Endothelial cell of umbilical vein (primary cell): ENCODE measurements at regions of chr20 and their contacts with region 1.

Region 1: DNA sequence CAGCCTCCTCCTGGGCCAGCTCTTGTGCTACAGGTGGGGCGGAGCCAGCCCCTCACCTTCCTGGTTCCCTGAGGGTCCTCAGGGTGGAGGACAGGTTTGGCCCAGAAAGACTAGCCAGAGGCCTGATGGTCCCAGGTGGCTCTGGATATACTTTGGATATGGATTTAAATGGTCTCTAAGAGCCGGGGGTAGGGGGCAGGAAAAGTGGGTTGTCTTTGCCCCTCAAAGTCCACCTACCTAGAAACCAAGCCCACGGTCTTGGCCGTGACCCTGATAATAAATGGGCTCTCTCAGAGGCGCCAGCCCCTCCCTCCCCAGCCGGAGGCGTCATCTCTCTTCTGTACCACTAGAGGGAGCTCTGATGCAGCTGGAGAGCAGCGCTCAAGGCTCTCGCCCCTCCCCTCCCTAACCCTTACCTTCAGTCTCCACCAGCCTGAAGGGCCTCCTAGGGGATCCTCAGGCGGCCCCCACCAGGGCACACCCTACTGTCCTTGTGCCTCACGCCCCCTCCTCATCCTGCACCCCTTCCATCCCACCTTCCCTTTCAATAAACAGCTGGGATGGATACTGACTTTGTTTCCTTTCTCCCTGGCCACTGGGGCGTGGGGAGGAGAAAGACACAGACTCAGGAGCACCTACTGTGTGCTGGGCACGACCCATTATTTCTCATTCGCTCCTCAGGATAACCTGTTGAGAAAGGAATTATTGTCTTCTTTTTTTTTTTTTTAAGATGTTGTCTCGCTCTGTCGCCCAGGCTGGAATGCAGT is 7.6 kb downstream of the NRSN2 start:
- DNase-seq: peak; percentile 76
- H3K4me3 ChIP-seq: no peak overlapping the region
- H3K27ac ChIP-seq: no peak overlapping the region
- H3K4me1 ChIP-seq: no peaks in the 10 kb centered on the region
- H3K27me3 ChIP-seq: no peaks in the 10 kb centered on the region
- CTCF ChIP-seq: peak; percentile 89 to 94
- POLR2A ChIP-seq: no peak

Region 2: GRCh38 chr20:371755-372542 is 17.5 kb after region 1 on chr20:
- CTCF ChIA-PET with region 1: interaction called, 39 read pairs
- POLR2A ChIA-PET with region 1: interaction called, 4 read pairs
- dilution Hi-C with region 1: no loop called
- intact Hi-C with region 1: loop called (anchors 2 kb)
- DNase-seq: peak; percentile 93
- H3K4me3 ChIP-seq: no peak overlapping the region
- H3K27ac ChIP-seq: peak overlapping the region; percentile 82
- H3K4me1 ChIP-seq: peaks cover 52% of the 10 kb centered on the region
- H3K27me3 ChIP-seq: no peaks in the 10 kb centered on the region
- CTCF ChIP-seq: no peak
- POLR2A ChIP-seq: no peak

Region 3: DNA sequence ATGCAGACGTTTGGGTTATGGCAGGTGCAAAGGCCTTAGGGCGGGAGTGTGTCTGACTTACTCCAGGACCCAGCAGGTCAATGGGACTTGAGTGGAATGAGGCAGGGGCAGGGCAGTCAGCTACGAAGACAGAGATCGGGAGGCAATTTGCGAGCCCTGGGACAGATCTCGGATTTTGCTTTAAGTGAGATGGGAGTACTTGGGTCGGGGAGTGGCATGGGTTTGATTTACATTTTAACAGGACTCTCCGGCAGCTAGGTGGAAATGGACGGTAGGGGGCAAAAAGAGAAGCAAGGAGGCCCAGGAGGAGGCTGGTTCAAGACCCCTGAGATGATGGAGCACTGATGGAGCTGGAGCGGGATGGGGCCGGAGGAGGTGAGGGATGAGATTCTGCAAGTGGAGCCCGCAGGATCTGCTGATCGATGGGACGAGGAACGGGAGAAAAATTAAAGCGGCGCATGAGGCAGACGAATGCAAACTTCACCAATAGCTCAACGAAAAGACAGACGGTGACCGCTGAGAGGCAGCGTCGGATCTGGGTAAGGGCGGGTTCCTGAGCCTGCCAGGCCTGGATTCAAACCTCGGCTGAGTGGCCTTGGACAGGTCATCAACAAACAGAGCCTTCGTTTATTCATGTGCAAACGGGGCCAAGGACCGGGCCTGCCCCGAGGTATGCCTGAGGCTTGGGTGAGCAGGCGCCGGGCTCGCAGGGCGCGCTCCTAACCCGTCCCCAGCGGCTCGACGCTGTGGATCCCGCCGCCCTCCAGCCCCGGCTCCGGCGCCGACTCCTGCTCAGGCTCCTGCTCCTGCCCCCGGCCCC is 52.9 kb after region 1 on chr20:
- CTCF ChIA-PET with region 1: interaction called, 14 read pairs
- POLR2A ChIA-PET with region 1: no interaction called
- dilution Hi-C with region 1: no loop called
- intact Hi-C with region 1: loop called (anchors 1 kb)
- DNase-seq: peak; percentile 84
- H3K4me3 ChIP-seq: peak overlapping the region; percentile 14 to 51 (median 29)
- H3K27ac ChIP-seq: peak overlapping the region; percentile 50
- H3K4me1 ChIP-seq: peaks cover 17% of the 10 kb centered on the region
- H3K27me3 ChIP-seq: no peaks in the 10 kb centered on the region
- CTCF ChIP-seq: peak; percentile 11 to 18
- POLR2A ChIP-seq: peak; percentile 61

Region 4: DNA sequence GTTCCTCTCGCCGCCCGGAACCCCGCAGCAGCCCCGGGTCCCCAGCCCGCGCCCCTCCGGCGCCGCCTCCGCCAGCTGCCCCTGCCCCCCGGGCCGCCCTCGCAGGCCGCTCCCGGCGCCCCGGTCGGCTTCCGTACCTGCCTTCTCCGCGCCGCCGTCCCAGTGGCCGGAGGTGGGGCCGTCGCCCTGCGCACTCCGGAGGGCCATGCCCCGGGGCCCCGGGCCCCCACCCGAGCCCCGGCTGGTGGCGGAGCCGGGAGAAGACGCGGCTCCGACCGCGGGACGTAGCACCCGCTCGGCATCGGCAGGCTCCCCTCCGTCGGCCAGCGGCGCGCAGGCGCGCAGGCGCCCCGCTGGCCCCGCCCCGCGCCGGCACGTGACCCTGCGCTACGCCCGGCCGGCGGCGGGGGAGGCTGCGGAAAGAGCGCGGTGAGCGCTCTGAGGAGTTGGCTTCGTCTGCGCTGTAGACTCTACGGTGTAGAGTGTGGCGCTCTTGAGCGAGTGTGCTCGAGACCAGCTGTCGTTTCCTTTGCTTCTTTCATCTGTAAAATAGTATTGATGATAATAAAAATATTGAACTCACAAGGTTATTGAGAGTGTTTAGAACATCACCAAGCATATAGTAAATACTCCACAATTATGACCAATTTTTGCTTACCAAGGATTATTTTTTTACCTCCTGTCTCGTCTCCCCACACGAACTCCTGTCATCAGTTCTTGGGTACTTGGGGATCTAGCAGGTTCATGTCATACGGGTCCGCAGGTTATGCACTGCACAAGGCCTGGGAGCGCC is 107.9 kb after region 1 on chr20 and contains the start of gene TBC1D20:
- CTCF ChIA-PET with region 1: no interaction called
- POLR2A ChIA-PET with region 1: no interaction called
- dilution Hi-C with region 1: no loop called
- intact Hi-C with region 1: loop called (anchors 1 kb)
- DNase-seq: peak; percentile 85
- H3K4me3 ChIP-seq: peak within 1 kb of the TSS; percentile 55 to 70 (median 66)
- H3K27ac ChIP-seq: peak within 1 kb of the TSS; percentile 48
- H3K4me1 ChIP-seq: peaks cover 28% of the 10 kb centered on the region
- H3K27me3 ChIP-seq: no peaks in the 10 kb centered on the region
- CTCF ChIP-seq: peak in 1 of 2 donors; percentile 16
- POLR2A ChIP-seq: peak; percentile 75
- total RNA-seq, gene TBC1D20: 30.6 and 34.3 TPM in 2 replicates

Region 5: DNA sequence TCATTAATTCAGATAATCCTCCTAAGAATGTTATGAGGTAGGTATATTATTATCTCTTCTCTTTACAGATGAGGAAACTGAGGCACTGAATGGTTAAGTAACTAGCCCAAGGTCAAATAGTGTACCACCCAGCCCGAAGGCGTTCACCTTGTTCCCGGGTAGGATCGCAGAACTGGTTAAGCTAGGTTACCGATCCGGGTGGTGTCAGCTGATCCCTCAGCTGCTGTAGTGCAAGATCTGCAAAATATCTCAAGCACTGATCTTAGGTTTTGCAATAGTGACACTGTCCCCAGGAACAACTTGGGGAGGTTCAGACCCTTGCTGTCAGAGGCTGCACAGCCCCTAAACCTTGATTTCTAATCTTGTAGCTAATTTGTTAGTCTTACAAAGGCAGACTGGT is 385.7 kb after region 1 on chr20:
- CTCF ChIA-PET with region 1: interaction called, 12 read pairs
- POLR2A ChIA-PET with region 1: no interaction called
- dilution Hi-C with region 1: no loop called
- intact Hi-C with region 1: loop called (anchors 1 kb)
- DNase-seq: no peak
- H3K4me3 ChIP-seq: no peak overlapping the region
- H3K27ac ChIP-seq: no peak overlapping the region
- H3K4me1 ChIP-seq: no peaks in the 10 kb centered on the region
- H3K27me3 ChIP-seq: peaks cover 0 to 2% of the 10 kb centered on the region in 2 experiments
- CTCF ChIP-seq: no peak
- POLR2A ChIP-seq: no peak